ENCODE measurements at regions of chr1 and their contacts with region 1.

Region 1: GRCh38 chr1:193104906-193105820 is at the start of gene GLRX2:
- DNase-seq: peak; percentile 86
- H3K4me3 ChIP-seq: peak within 1 kb of the TSS; percentile 56 to 86 (median 86)
- H3K27ac ChIP-seq: peak within 1 kb of the TSS; percentile 77
- H3K4me1 ChIP-seq: peaks cover 12% of the 10 kb centered on the region
- H3K27me3 ChIP-seq: no peaks in the 10 kb centered on the region
- CTCF ChIP-seq: peak in 1 of 2 donors; percentile 22
- total RNA-seq, gene GLRX2: 6.7 to 36.3 TPM

Region 2: GRCh38 chr1:192713921-192714320 is 391.2 kb before region 1 on chr1:
- CTCF ChIA-PET with region 1: no interaction called
- dilution Hi-C with region 1: no loop called
- in situ Hi-C with region 1: no loop called
- intact Hi-C with region 1: no loop called
- DNase-seq: no peak
- H3K4me3 ChIP-seq: no peak overlapping the region
- H3K27ac ChIP-seq: no peak overlapping the region
- H3K4me1 ChIP-seq: peaks cover 4% of the 10 kb centered on the region
- H3K27me3 ChIP-seq: no peaks in the 10 kb centered on the region
- CTCF ChIP-seq: no peak

Region 3: DNA sequence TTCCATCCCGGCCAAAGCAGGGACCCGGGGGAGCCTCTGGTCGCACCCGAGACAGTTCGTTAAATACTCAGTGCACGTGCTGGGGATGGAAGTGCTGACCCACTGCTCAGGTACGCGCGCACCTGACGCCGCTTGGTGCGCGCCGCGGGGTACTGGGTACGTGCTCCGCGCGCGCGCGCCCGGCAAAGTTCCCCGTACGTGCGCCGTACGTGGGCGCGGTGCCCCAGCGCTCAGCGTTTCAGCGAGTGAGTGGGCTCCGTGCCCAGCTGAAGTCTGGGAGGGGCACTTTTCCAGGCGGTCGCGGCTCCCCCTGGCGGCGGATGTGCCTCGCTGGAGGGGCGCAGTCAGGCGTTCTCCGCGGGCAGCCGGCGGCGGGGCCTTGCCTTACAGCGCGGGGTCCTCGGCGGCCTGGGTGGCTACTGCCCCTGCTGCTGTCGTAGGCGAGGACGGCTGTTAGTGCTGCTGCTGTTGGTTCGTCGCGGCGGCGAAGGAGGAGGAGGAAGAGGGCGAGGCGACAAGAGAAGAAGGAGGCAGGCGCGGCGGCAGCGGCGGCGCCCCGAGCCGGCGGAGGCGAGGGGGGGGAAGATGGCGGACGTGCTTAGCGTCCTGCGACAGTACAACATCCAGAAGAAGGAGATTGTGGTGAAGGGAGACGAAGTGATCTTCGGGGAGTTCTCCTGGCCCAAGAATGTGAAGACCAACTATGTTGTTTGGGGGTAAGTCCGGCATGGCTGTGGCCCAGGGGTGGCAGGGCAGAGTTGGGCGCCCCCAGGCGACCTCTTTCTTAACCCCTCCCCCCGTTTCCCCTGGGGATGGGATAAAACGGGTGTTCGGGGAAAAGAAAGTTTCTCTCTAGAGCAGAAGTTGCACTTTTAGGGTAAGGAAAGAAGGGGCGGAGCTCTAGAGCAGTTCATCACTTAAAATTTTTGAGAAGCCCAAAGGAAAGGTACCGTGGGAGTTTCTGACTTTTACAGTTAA is 16.7 kb after region 1 on chr1 and contains the start of gene CDC73:
- CTCF ChIA-PET with region 1: interaction called, 15 read pairs
- dilution Hi-C with region 1: no loop called
- in situ Hi-C with region 1: no loop called
- intact Hi-C with region 1: loop called (anchors 1 kb)
- DNase-seq: peak; percentile 97
- H3K4me3 ChIP-seq: peak within 1 kb of the TSS; percentile 90 to 97 (median 93)
- H3K27ac ChIP-seq: peak within 1 kb of the TSS; percentile 86
- H3K4me1 ChIP-seq: peaks cover 3% of the 10 kb centered on the region
- H3K27me3 ChIP-seq: no peaks in the 10 kb centered on the region
- CTCF ChIP-seq: peak; percentile 78 to 95
- total RNA-seq, gene CDC73: 27.5 to 58.3 TPM

Measured in mammary epithelial cell (primary cell).